PC-3 (cell line): ENCODE measurements at regions of chr2 and their contacts with region 1.

Region 1: GRCh38 chr2:139394801-139395200 is 614.6 kb upstream of the NXPH2 start:
- DNase-seq: no peak
- ATAC-seq: no peak
- H3K4me3 ChIP-seq: no peak overlapping the region
- H3K27ac ChIP-seq: no peak overlapping the region
- H3K4me1 ChIP-seq: no peaks in the 10 kb centered on the region
- H3K27me3 ChIP-seq: no peaks in the 10 kb centered on the region
- CTCF ChIP-seq: no peak

Region 2: DNA sequence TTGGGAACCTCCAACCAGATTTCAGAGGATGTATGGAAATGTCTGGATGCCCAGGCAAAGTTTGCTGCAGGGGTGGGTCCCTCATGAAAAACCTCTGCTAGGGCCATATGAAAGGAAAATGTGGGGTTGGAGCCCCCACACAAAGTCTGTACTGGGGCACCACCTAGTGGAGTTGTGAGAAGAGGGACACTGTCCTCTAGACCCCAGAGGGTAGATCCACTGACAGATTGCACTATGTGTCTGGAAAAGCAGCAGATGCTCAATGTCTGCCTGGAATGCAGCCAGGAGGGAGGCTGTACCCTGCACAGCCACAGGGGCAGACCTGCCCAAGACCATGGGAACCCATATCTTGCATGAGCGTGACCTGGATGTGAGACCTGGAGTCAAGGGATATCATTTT is 40.9 kb before region 1 on chr2:
- CTCF ChIA-PET with region 1: no interaction called
- POLR2A ChIA-PET with region 1: no interaction called
- intact Hi-C with region 1: no loop called
- DNase-seq: no peak
- ATAC-seq: no peak
- H3K4me3 ChIP-seq: no peak overlapping the region
- H3K27ac ChIP-seq: no peak overlapping the region
- H3K4me1 ChIP-seq: no peaks in the 10 kb centered on the region
- H3K27me3 ChIP-seq: no peaks in the 10 kb centered on the region
- CTCF ChIP-seq: no peak

Region 3: GRCh38 chr2:139488037-139488436 is 93.2 kb after region 1 on chr2:
- CTCF ChIA-PET with region 1: no interaction called
- POLR2A ChIA-PET with region 1: interaction called, 15 read pairs
- intact Hi-C with region 1: no loop called
- DNase-seq: peak; percentile 2
- ATAC-seq: no peak
- H3K4me3 ChIP-seq: no peak overlapping the region
- H3K27ac ChIP-seq: no peak overlapping the region
- H3K4me1 ChIP-seq: no peaks in the 10 kb centered on the region
- H3K27me3 ChIP-seq: no peaks in the 10 kb centered on the region
- CTCF ChIP-seq: no peak